ENCODE measurements at regions of chr14 and their contacts with region 1.

Region 1: GRCh38 chr14:74612350-74613021 is 449 bp upstream of the LTBP2 start:
- DNase-seq: peak; percentile 84
- ATAC-seq: peak; percentile 90
- H3K4me3 Mint-ChIP-seq: peak overlapping the region; percentile 73
- H3K27ac Mint-ChIP-seq: no peak overlapping the region
- H3K4me1 Mint-ChIP-seq: peaks cover 22% of the 10 kb centered on the region
- H3K27me3 Mint-ChIP-seq: peaks cover 49% of the 10 kb centered on the region

Region 2: GRCh38 chr14:74176400-74176793 is 436.1 kb before region 1 on chr14:
- CTCF ChIA-PET with region 1: no interaction called
- POLR2A ChIA-PET with region 1: no interaction called
- DNase-seq: no peak
- ATAC-seq: no peak
- H3K4me3 Mint-ChIP-seq: no peak overlapping the region
- H3K27ac Mint-ChIP-seq: no peak overlapping the region
- H3K4me1 Mint-ChIP-seq: no peaks in the 10 kb centered on the region
- H3K27me3 Mint-ChIP-seq: no peaks in the 10 kb centered on the region

Region 3: GRCh38 chr14:74583689-74584434 is 28.6 kb before region 1 on chr14:
- CTCF ChIA-PET with region 1: interaction called, 12 read pairs
- POLR2A ChIA-PET with region 1: no interaction called
- DNase-seq: no peak
- ATAC-seq: no peak
- H3K4me3 Mint-ChIP-seq: no peak overlapping the region
- H3K27ac Mint-ChIP-seq: no peak overlapping the region
- H3K4me1 Mint-ChIP-seq: peaks cover 14% of the 10 kb centered on the region
- H3K27me3 Mint-ChIP-seq: peaks cover 18% of the 10 kb centered on the region

Region 4: DNA sequence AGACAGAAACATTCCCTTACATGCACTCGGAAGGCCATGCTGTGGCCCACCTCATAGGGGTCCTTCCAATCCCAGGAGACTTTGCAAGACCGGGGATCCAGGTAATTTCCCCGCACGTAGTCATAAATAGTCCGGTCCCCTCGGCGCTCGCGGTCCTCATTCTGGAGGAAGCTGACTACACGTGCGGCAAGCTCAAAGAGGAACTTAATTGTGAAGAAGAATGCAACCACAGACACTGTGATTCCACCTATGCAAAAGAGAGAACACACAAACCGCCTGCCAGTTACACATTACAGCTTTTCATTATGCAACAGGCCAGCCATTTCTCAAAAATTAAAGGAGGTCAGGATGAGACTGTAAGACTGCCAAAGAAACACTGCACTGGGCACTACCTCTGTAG is 71.9 kb after region 1 on chr14:
- CTCF ChIA-PET with region 1: interaction called, 14 read pairs
- POLR2A ChIA-PET with region 1: no interaction called
- DNase-seq: no peak
- ATAC-seq: no peak
- H3K4me3 Mint-ChIP-seq: no peak overlapping the region
- H3K27ac Mint-ChIP-seq: no peak overlapping the region
- H3K4me1 Mint-ChIP-seq: peaks cover 19% of the 10 kb centered on the region
- H3K27me3 Mint-ChIP-seq: no peaks in the 10 kb centered on the region

Region 5: GRCh38 chr14:74784634-74785033 is 172.1 kb after region 1 on chr14:
- CTCF ChIA-PET with region 1: interaction called, 11 read pairs
- POLR2A ChIA-PET with region 1: no interaction called
- DNase-seq: no peak
- ATAC-seq: peak; percentile 23
- H3K4me3 Mint-ChIP-seq: no peak overlapping the region
- H3K27ac Mint-ChIP-seq: peak overlapping the region; percentile 10
- H3K4me1 Mint-ChIP-seq: peaks cover 16% of the 10 kb centered on the region
- H3K27me3 Mint-ChIP-seq: no peaks in the 10 kb centered on the region

Region 6: GRCh38 chr14:74816124-74816523 is 203.6 kb after region 1 on chr14:
- CTCF ChIA-PET with region 1: interaction called, 11 read pairs
- POLR2A ChIA-PET with region 1: no interaction called
- DNase-seq: no peak
- ATAC-seq: no peak
- H3K4me3 Mint-ChIP-seq: no peak overlapping the region
- H3K27ac Mint-ChIP-seq: no peak overlapping the region
- H3K4me1 Mint-ChIP-seq: peaks cover 5% of the 10 kb centered on the region
- H3K27me3 Mint-ChIP-seq: no peaks in the 10 kb centered on the region

Region 7: GRCh38 chr14:74905375-74906142 is 293.1 kb after region 1 on chr14:
- CTCF ChIA-PET with region 1: interaction called, 15 read pairs
- POLR2A ChIA-PET with region 1: no interaction called
- DNase-seq: peak; percentile 81
- ATAC-seq: peak; percentile 65
- H3K4me3 Mint-ChIP-seq: no peak overlapping the region
- H3K27ac Mint-ChIP-seq: peak overlapping the region; percentile 50
- H3K4me1 Mint-ChIP-seq: peaks cover 12% of the 10 kb centered on the region
- H3K27me3 Mint-ChIP-seq: no peaks in the 10 kb centered on the region

Measured in activated CD8-positive, alpha-beta T cell treated with anti-CD3 and anti-CD28 coated beads, Interleukin-2, amount 10 ng/mL, durations not matched to agents 7 days and 5 days (primary cell).